ENCODE measurements at regions of chr12 and their contacts with region 1.

Region 1: DNA sequence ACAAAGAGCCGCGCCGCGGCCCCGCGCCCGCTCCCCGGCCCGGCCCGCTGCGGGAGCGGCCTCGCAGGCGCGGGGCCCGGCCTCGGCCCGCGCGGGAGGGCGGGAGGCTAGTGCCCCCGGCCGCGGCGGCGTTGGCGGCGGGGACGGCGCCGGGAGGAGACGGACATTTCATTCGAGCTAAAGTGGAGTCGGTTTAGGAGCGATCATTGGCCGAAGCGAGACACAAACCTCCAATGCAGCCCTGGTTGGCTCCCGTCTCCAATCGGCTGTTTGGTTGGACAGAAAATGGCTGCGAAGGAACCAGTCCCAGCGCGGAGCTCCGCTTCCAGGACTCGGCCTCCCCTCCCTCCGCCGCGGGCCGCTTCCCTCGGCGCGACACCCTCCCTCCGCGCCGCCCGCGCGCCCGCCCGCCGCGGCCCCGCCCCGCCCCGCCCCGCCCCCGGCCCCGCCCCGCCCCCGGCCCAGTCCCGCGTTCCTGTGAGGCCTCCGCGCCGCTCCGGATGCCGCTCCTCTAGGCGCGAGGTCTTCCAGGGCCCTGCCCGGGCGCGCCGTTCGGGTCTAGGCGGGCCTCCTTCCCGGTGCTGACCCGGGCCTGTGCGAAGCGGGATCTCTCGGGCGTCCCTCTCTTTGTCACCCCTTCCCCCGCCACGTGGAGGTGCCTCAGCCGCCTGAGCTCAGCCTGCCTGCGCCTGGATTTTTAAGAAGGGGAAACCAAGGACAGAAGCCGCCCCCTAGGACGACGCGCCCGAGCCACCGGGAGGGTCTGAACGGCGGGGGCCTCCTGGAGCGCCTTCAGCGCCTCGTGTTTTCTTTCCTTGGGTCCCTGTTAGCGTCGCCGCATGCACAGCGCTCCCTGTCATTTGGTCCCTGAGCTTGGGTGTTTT is at the start of gene NFYB:
- DNase-seq: peak; percentile 92 to 96
- ATAC-seq: peak; percentile 95 to 97 (median 96)
- H3K4me3 ChIP-seq: peak within 1 kb of the TSS; percentile 92
- H3K27ac ChIP-seq: peak within 1 kb of the TSS; percentile 94
- H3K4me1 ChIP-seq: peaks cover 27% of the 10 kb centered on the region
- H3K27me3 ChIP-seq: peaks cover 0 to 2% (median 0%) of the 10 kb centered on the region in 3 donors
- CTCF ChIP-seq: no peak
- total RNA-seq, gene NFYB: 14.5 to 32.2 (median 21.9) TPM

Region 2: DNA sequence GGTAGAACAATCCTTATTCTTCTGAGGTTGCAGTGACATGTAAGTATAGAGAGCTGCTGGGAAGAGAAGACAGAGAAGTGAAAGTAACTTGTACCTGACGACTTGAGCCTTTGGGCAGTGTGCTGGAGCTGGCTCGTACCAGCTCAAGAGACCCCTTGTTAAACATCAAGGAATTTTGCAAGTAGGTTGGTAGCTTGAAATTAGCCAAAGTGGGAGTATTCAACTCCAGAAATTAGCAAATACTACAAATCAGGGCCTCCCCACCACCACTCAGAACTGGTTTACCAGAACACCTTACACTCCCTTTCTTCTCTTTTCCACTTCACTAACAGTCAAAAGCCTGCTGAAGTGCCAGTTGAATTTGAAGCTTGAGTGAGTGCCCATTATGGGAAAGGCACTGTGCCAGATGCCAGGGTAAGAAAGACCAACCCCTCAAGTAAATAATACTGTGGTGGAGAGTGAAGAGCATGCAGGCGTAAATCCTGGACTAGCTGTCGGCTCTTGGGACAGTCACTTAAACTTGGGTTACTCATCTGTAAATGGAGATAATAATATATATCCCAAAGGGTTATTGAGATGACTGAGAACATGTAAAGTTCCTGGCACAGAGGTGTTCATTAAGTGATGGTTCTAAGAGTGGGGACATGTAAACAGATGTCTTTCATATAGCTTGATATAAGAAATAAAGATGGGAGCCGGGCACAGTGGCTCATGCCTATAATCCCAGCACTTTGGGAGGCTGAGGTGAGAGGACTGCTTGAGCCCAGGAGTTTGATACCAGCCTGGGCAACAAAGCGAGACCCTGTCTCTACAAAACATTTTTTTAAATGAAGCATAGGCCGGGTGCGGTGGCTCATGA is 138.3 kb after region 1 on chr12:
- intact Hi-C with region 1: loop called in 1 of 2 experiments (anchors 2 kb)
- DNase-seq: no peak
- ATAC-seq: no peak
- H3K4me3 ChIP-seq: no peak overlapping the region
- H3K27ac ChIP-seq: no peak overlapping the region
- H3K4me1 ChIP-seq: peaks cover 8% of the 10 kb centered on the region
- H3K27me3 ChIP-seq: no peaks in the 10 kb centered on the region
- CTCF ChIP-seq: no peak

Region 3: DNA sequence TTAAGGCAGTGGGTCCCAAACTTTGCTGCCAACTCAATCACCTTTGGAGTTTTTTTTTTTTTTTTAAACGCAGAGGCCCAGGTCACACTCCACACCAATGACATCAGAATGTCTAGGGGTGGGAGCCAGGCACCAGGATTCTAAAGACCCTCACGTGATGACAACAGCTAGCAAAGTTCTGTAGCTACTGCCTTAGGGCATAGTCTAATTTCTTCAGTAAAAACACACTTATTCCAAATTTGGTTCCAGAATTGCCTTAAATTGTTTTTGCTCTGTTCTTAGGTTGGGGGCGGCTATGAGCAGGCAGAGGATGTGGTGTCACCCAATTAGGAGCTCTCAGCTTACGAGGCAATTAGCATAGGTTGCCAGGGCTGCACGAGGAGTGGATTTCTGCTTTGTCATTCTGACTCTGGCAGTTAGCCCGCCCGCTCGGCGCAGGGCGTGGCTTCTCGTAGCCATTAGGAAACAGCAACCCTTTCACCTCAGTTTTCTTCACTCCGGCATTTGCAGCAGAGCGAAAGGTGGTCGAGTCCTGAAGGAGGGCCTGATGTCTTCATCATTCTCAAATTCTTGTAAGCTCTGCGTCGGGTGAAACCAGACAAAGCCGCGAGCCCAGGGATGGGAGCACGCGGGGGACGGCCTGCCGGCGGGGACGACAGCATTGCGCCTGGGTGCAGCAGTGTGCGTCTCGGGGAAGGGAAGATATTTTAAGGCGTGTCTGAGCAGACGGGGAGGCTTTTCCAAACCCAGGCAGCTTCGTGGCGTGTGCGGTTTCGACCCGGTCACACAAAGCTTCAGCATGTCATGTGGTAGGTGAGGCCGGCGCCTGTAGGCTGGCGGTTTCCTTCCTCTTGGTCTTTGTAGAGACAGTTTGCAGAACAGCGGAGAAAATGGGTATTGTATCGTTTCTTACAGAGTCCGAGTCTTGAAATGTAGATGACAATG is 148.7 kb after region 1 on chr12:
- intact Hi-C with region 1: loop called in 1 of 2 experiments (anchors 5 kb)
- DNase-seq: peak; percentile 93 to 95
- ATAC-seq: peak; percentile 82 to 89 (median 86)
- H3K4me3 ChIP-seq: peak overlapping the region; percentile 90
- H3K27ac ChIP-seq: peak overlapping the region; percentile 98
- H3K4me1 ChIP-seq: peaks cover 35% of the 10 kb centered on the region
- H3K27me3 ChIP-seq: no peaks in the 10 kb centered on the region
- CTCF ChIP-seq: no peak

Region 4: DNA sequence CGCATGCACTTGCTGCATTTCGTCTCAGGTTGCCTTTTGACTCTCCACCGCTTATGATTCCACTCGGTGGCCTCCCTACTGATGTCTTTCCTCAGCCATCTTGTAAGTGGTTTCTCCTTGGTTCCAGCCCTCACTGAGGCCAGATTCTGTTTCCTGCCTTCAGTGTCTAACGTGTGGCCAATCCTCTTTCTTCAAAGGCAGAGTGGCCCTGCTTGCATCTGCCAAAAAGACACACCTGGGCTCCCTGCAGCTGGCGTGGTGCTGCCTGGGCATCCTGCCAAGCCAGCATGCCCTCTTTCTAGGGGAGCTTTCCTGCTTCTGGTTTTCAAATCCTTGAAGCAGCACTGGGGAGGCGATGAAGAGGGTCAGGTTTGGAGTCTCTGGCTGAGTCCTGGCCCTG is 506.1 kb after region 1 on chr12:
- intact Hi-C with region 1: no loop called
- DNase-seq: no peak
- ATAC-seq: no peak
- H3K4me3 ChIP-seq: no peak overlapping the region
- H3K27ac ChIP-seq: no peak overlapping the region
- H3K4me1 ChIP-seq: no peaks in the 10 kb centered on the region
- H3K27me3 ChIP-seq: no peaks in the 10 kb centered on the region
- CTCF ChIP-seq: no peak